Right ventricle myocardium inferior (tissue), 1 donor: ENCODE measurements at regions of chr7 and their contacts with region 1.

Region 1: GRCh38 chr7:108146070-108146837 is 16.1 kb upstream of the LAMB4 start:
- DNase-seq: no peak
- ATAC-seq: peak; percentile 90

Region 2: GRCh38 chr7:107462740-107463444 is 683.4 kb before region 1 on chr7:
- intact Hi-C with region 1: loop called (anchors 5 kb)
- DNase-seq: no peak
- ATAC-seq: peak; percentile 87

Region 3: GRCh38 chr7:107743567-107744344 is 402.5 kb before region 1 on chr7 and contains the start of gene CBLL1:
- intact Hi-C with region 1: loop called (anchors 5 kb)
- DNase-seq: peak; percentile 99
- ATAC-seq: peak; percentile 99
- total RNA-seq, gene CBLL1: 20.5 TPM

Region 4: DNA sequence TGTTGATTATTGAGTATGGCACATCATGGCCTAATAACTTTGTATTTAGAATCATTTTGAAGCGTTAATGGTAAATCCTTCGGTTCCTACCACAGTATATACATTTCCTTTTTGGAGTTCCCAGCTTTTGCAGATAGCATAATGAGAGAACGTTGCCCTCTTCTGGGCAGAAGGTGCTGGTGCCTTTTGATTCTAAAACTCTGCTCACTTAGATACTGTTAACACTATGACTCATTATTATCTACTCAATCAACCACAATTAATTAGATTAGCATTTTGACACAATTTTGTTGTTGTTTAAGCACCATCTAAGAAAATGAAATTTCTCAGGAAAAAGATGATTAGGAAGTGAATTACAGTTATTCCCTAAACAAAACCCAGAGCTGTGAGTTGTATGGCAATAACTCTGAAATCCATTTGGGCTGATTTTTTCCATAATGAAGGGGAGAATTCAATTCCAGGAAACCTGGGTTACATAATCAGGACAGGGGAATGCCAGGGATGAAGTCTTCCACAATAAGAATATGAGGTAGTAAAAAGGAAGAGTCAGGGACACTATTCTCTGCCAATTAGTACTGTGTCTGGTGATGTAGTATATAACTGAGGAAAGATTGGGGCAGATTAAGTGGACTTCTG is 266.7 kb before region 1 on chr7:
- intact Hi-C with region 1: loop called (anchors 2 kb)
- DNase-seq: no peak
- ATAC-seq: peak; percentile 64

Region 5: DNA sequence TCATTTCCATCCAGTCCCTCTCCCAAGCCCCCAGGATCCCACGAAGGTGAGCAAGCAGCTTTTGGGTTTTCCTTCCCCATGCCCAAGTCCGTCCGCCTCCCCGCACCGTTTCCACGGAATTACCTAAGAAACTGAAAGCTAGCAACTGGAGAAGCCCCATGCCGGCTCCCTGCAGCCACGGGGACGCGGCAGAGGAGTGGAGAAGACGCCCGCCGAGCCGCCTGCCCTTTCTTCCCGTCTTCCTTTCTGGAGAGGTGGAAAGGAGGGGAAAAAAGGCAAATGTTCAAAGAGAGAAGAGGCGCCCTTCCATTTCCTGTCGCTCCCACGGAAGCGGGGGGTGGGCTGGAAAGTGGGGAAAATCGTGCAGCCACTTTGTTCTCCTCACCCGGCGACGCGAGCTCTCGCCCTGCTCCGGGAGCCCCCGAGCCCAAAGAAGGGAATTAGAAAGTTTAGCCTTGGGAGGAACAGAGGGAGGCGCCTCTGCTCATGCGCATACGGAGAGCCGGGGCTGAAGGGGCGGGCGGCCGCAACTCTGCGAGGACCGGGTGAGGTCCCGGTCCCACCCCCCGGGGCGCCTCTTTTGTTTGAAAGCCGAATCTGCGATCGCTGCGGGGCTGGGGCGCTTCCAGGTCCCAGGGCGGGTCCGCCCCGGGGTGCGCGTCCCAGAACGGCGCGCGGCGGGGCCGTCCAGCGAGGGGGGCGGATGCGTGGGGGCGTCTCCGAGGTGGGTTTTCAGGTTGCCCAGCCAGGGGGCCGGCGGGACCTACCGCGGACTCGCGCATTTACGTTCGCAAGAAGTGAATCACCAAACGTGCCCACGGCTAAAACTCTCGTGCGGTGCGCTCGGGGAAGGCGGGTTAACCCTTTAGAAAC is 143.3 kb before region 1 on chr7 and contains the start of gene LAMB1:
- intact Hi-C with region 1: loop called (anchors 5 kb)
- DNase-seq: peak; percentile 93
- ATAC-seq: peak; percentile 85
- total RNA-seq, gene LAMB1: 83.2 TPM

Region 6: GRCh38 chr7:108109221-108109908 is 36.9 kb before region 1 on chr7:
- intact Hi-C with region 1: loop called (anchors 2 kb)
- DNase-seq: no peak
- ATAC-seq: no peak

Region 7: GRCh38 chr7:108158776-108159175 is 12.5 kb after region 1 on chr7:
- intact Hi-C with region 1: no loop called
- DNase-seq: no peak
- ATAC-seq: no peak

Region 8: DNA sequence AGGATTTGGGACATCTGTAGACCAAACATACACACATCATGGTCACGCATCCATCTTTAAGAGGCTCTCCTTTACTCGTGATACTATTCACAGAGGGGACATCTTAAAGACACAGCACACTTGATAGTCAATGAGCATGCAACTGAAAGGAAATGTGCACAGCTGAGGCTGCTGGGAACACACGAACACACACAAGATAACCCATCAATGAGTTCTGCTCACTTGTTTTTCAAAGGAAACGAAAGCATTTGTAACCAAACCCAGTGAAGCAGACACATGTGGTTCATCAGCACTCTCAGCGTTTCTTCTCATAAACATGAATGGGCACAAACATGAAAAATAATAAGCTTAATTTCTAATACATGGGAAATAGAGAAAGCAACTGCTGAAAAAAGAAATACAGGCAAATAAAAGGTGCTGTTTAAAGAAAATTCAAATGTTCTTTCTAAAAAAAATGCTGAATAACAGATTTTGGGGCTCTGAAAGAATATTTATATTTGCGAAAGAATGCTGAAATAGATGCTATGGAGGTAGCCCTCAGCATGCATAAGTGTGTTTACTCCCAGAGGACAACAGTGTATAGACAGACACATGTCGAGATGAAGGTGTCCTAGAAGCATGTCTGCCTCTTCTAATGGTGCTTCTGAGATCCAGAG is 43.6 kb after region 1 on chr7:
- intact Hi-C with region 1: no loop called
- DNase-seq: no peak
- ATAC-seq: no peak